GM12878 (cell line): ENCODE measurements at regions of chr17 and their contacts with region 1.

Region 1: GRCh38 chr17:28849281-28849680 is 5.5 kb upstream of the ERAL1 start:
- DNase-seq: no peak
- ATAC-seq: peak; percentile 91
- H3K4me3 ChIP-seq: no peak overlapping the region
- H3K27ac ChIP-seq: no peak overlapping the region
- H3K4me1 ChIP-seq: peaks cover 3% of the 10 kb centered on the region
- H3K27me3 ChIP-seq: no peaks in the 10 kb centered on the region
- CTCF ChIP-seq: peak; percentile 7 to 57 (median 19); a peak in 3 of 6 replicates
- EP300 ChIP-seq: no peak
- POLR2A ChIP-seq: no peak
- RAD21 ChIP-seq: peak; percentile 53

Region 2: DNA sequence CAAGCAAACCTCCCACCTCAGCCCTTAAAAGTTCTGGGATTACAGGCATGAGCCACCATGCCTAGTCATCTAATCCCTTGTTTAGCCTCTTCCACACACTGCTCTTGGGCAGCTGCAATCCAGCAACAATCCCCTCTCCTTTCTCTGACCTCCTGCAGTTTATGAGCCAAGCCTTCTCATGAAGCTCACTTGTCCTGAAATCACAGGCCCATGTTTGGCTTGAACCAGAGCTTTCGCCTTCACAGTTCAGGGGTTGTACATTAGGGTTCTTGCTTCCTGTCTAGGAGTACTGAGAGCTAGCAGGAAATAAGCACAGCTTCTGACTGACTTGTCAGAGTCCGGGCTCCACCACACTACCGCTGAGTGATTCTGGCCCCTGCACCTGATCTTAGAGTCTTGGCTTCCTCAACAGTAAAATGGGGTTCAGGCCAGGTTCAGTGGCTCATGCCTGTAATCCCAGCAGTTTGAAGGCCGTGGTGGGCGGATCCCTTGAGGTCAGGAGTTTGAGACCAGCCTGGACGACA is 21.8 kb after region 1 on chr17:
- CTCF ChIA-PET with region 1: interaction called, 15 read pairs
- POLR2A ChIA-PET with region 1: no interaction called
- RAD21 ChIA-PET with region 1: interaction called, 3 read pairs
- SMC1A ChIA-PET with region 1: interaction called, 3 read pairs
- in situ Hi-C with region 1: no loop called
- intact Hi-C with region 1: no loop called
- DNase-seq: peak; percentile 79
- ATAC-seq: peak; percentile 99
- H3K4me3 ChIP-seq: no peak overlapping the region
- H3K27ac ChIP-seq: peak overlapping the region; percentile 61
- H3K4me1 ChIP-seq: peaks cover 15% of the 10 kb centered on the region
- H3K27me3 ChIP-seq: no peaks in the 10 kb centered on the region
- CTCF ChIP-seq: no peak
- EP300 ChIP-seq: no peak
- POLR2A ChIP-seq: peak; percentile 61
- RAD21 ChIP-seq: peak; percentile 25; the same call in 1 of the 2 replicates

Region 3: GRCh38 chr17:28889996-28890395 is 40.7 kb after region 1 on chr17:
- CTCF ChIA-PET with region 1: interaction called, 22 read pairs
- POLR2A ChIA-PET with region 1: interaction called, 4 read pairs
- RAD21 ChIA-PET with region 1: interaction called, 16 read pairs
- SMC1A ChIA-PET with region 1: interaction called, 6 read pairs
- in situ Hi-C with region 1: no loop called
- intact Hi-C with region 1: no loop called
- DNase-seq: no peak
- ATAC-seq: no peak
- H3K4me3 ChIP-seq: no peak overlapping the region
- H3K27ac ChIP-seq: no peak overlapping the region
- H3K4me1 ChIP-seq: peaks cover 59% of the 10 kb centered on the region
- H3K27me3 ChIP-seq: no peaks in the 10 kb centered on the region
- CTCF ChIP-seq: no peak
- EP300 ChIP-seq: no peak
- POLR2A ChIP-seq: no peak
- RAD21 ChIP-seq: no peak

Region 4: DNA sequence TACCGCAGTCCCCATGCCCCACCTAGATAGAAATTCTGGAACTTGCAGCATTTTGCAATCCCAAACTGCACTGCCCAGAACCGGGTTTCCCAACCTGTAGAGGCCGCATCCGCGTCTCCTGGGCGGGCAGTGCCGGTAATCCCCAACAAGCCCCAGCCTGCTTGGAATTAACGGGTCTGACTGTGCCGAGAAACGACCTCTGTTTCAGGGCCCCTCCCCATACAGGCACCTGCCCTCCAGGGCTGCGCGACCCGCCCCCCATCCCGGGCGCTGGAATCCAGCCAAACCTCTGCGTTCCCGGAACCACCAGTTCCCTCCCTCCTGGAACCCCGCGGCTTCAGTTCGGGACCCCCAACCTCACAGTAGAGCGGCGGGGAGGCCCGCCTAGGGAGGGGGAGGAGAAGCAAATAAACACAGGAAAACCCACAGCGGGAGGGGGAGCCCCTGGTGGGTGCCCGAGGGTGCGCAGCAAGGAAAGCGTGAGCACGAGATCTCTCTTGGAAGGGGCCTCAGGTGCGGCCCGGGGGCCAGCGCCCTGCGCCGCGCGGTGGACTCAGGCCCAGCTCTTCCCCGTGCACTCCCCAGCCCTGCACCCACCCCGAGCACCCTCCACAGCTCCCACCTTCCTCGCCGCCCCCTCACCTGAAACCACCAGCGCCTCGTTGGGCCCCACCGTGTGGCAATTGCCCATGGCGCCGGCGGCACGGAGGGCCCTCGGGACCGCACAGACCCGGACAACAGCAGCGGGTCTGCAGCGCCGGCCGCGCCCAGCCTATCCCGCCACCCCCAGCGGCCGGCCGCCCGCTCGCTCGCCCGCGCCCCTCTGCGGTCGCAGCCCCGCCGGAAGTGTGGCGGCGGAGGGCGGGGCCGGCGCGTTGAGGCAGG is 47.8 kb after region 1 on chr17 and contains the start of gene FLOT2:
- CTCF ChIA-PET with region 1: interaction called, 57 read pairs
- POLR2A ChIA-PET with region 1: interaction called, 4 read pairs
- RAD21 ChIA-PET with region 1: interaction called, 16 read pairs
- SMC1A ChIA-PET with region 1: interaction called, 12 read pairs
- in situ Hi-C with region 1: no loop called
- intact Hi-C with region 1: no loop called
- DNase-seq: no peak
- ATAC-seq: peak; percentile 43
- H3K4me3 ChIP-seq: peak within 1 kb of the TSS; percentile 92
- H3K27ac ChIP-seq: peak within 1 kb of the TSS; percentile 72
- H3K4me1 ChIP-seq: peaks cover 39% of the 10 kb centered on the region
- H3K27me3 ChIP-seq: no peaks in the 10 kb centered on the region
- CTCF ChIP-seq: peak in 2 of 3 experiments; percentile 11 to 17; a peak in 2 of 6 replicates
- EP300 ChIP-seq: no peak
- POLR2A ChIP-seq: peak; percentile 71
- RAD21 ChIP-seq: no peak
- polyA plus RNA-seq, gene FLOT2: 56.8 to 121 TPM

Region 5: GRCh38 chr17:28902819-28903545 is 53.7 kb after region 1 on chr17 and contains the start of gene DHRS13:
- CTCF ChIA-PET with region 1: interaction called, 57 read pairs
- POLR2A ChIA-PET with region 1: interaction called, 3 read pairs
- RAD21 ChIA-PET with region 1: interaction called, 16 read pairs
- SMC1A ChIA-PET with region 1: interaction called, 9 read pairs
- in situ Hi-C with region 1: no loop called
- intact Hi-C with region 1: loop called (anchors 1 kb)
- DNase-seq: peak; percentile 81
- ATAC-seq: peak; percentile 91
- H3K4me3 ChIP-seq: peak within 1 kb of the TSS; percentile 82
- H3K27ac ChIP-seq: no peak within 1 kb of the TSS; the same call in 1 of the 2 replicates
- H3K4me1 ChIP-seq: peaks cover 16% of the 10 kb centered on the region
- H3K27me3 ChIP-seq: no peaks in the 10 kb centered on the region
- CTCF ChIP-seq: peak; percentile 89 to 100 (median 97)
- EP300 ChIP-seq: peak in 1 of 2 experiments; percentile 51; a peak in 1 of 4 replicates
- POLR2A ChIP-seq: peak; percentile 70
- RAD21 ChIP-seq: peak; percentile 54
- polyA plus RNA-seq, gene DHRS13: 0.18 TPM in 1 of 2 experiments, not detected in the other

Region 6: GRCh38 chr17:28916302-28916934 is 67.1 kb after region 1 on chr17:
- CTCF ChIA-PET with region 1: interaction called, 16 read pairs
- POLR2A ChIA-PET with region 1: no interaction called
- RAD21 ChIA-PET with region 1: no interaction called
- SMC1A ChIA-PET with region 1: interaction called, 12 read pairs
- in situ Hi-C with region 1: no loop called
- intact Hi-C with region 1: no loop called
- DNase-seq: no peak
- ATAC-seq: peak; percentile 89
- H3K4me3 ChIP-seq: no peak overlapping the region
- H3K27ac ChIP-seq: no peak overlapping the region
- H3K4me1 ChIP-seq: no peaks in the 10 kb centered on the region
- H3K27me3 ChIP-seq: no peaks in the 10 kb centered on the region
- CTCF ChIP-seq: peak; percentile 55 to 59 (median 57)
- EP300 ChIP-seq: no peak
- POLR2A ChIP-seq: no peak
- RAD21 ChIP-seq: peak; percentile 58